Activated CD4-positive, alpha-beta T cell treated with anti-CD3 and anti-CD28 coated beads for 36 hours (primary cell): ENCODE measurements at regions of chr2 and their contacts with region 1.

Region 1: GRCh38 chr2:160353166-160353565 is 140.4 kb downstream of the RBMS1 start:
- DNase-seq: peak; percentile 34
- ATAC-seq: peak; percentile 79
- H3K4me3 Mint-ChIP-seq: no peak overlapping the region
- H3K27ac Mint-ChIP-seq: no peak overlapping the region
- H3K4me1 Mint-ChIP-seq: peaks cover 80% of the 10 kb centered on the region
- H3K27me3 Mint-ChIP-seq: no peaks in the 10 kb centered on the region

Region 2: DNA sequence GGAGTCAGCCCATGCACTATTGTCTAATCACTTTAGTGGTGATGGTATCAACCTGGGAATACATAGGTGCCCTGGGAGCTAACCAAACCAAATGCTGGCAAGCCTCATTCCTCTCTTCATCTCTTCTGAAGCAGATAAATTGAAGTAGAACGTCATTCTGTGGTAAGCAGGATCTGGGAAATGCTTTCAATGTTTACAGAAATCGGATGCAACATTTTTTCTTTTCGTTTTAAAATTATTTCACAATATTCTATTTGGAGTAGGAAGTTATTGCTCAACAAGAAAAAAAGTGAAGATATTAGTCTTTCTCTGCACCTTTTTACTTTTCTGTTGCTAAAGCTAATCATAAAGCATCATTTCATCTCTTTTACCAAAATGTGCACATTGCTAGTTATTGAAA is 26.3 kb after region 1 on chr2:
- CTCF ChIA-PET with region 1: interaction called, 4 read pairs
- POLR2A ChIA-PET with region 1: no interaction called
- intact Hi-C with region 1: loop called in 1 of 2 experiments (anchors 2 kb)
- DNase-seq: no peak
- ATAC-seq: no peak
- H3K4me3 Mint-ChIP-seq: no peak overlapping the region
- H3K27ac Mint-ChIP-seq: no peak overlapping the region
- H3K4me1 Mint-ChIP-seq: peaks cover 71% of the 10 kb centered on the region
- H3K27me3 Mint-ChIP-seq: no peaks in the 10 kb centered on the region

Region 3: GRCh38 chr2:160918906-160919503 is 565.8 kb after region 1 on chr2:
- CTCF ChIA-PET with region 1: no interaction called
- POLR2A ChIA-PET with region 1: no interaction called
- intact Hi-C with region 1: loop called in 1 of 2 experiments (anchors 1 kb)
- DNase-seq: peak; percentile 65
- ATAC-seq: no peak
- H3K4me3 Mint-ChIP-seq: no peak overlapping the region
- H3K27ac Mint-ChIP-seq: no peak overlapping the region
- H3K4me1 Mint-ChIP-seq: no peaks in the 10 kb centered on the region
- H3K27me3 Mint-ChIP-seq: no peaks in the 10 kb centered on the region

Region 4: GRCh38 chr2:160970052-160970965 is 617.1 kb after region 1 on chr2:
- CTCF ChIA-PET with region 1: no interaction called
- POLR2A ChIA-PET with region 1: no interaction called
- intact Hi-C with region 1: loop called in 1 of 2 experiments (anchors 5 kb)
- DNase-seq: peak; percentile 20
- ATAC-seq: no peak
- H3K4me3 Mint-ChIP-seq: no peak overlapping the region
- H3K27ac Mint-ChIP-seq: no peak overlapping the region
- H3K4me1 Mint-ChIP-seq: peaks cover 5% of the 10 kb centered on the region
- H3K27me3 Mint-ChIP-seq: peaks cover 1% of the 10 kb centered on the region

Region 5: DNA sequence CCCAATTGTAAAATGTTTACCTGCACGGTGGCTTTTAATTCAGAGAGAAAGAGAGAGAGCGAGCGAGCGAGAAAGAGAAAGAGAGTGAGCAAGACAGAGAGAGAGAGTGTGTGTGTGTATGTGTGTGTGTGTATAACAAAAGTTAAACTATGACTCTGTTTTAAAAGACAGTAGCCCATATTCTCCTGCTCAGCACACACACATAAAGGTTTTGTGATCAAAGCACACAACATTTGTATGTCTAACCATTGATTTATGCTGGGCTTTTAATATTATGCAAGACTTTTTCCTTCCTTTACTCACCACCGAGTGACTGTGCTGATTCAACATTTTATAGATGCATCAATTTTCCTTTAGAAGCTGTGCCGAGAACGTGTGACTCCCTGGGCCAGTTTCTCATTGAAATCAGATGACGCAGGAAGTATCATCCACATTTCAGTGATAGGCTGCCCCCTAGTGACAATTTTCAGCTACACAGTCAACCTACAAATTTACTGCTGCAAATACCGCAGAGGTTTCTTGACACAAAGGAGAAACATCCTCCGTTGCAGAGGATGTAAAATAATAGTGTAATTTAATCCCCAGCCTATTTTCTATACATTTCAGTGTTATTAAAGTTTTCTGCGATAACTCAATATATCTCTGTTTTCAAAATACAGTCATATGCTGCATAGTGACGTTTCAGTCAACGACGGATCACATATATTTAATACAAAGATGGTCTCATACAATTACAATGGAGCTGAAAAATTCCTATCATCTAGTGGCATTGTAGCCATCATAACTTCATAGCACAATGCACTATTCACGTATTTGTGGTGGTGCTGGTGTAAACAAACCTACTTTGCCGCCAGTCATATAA is 641.2 kb after region 1 on chr2:
- CTCF ChIA-PET with region 1: interaction called, 12 read pairs
- POLR2A ChIA-PET with region 1: interaction called, 3 read pairs
- intact Hi-C with region 1: loop called in 1 of 2 experiments (anchors 10 kb)
- DNase-seq: peak; percentile 79
- ATAC-seq: peak; percentile 94
- H3K4me3 Mint-ChIP-seq: no peak overlapping the region
- H3K27ac Mint-ChIP-seq: no peak overlapping the region
- H3K4me1 Mint-ChIP-seq: peaks cover 10% of the 10 kb centered on the region
- H3K27me3 Mint-ChIP-seq: no peaks in the 10 kb centered on the region